T-cell (primary cell): ENCODE measurements at regions of chr20 and their contacts with region 1.

Region 1: DNA sequence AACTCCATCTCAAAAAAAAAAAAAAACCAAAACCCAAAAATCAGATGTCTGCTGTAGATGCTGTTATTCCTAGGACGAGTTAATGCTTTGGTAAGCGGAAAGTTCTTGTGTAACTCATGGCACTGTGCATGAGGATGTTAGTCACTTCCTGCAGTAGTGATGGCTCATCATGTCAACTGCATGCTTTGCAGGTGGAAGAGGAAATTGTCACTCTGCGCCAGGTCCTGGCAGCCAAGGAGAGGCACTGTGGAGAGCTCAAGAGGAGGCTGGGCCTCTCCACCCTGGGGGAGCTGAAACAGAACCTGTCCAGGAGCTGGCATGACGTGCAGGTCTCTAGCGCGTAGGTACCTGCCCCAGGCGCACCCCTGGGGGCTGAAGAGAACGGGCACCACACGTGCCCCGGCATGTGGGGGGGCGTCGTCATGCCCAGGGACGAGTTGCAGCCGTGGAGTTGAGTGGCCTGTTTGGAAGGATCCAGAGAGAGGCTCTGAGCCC is 8.5 kb downstream of the TPD52L2 start:
- DNase-seq: no peak
- ATAC-seq: peak; percentile 37 to 84 (median 52)
- H3K4me3 ChIP-seq: no peak overlapping the region
- H3K4me3 Mint-ChIP-seq: no peak overlapping the region
- H3K27ac ChIP-seq: no peak overlapping the region
- H3K27ac Mint-ChIP-seq: peak overlapping the region in 1 of 2 donors; percentile 36
- H3K4me1 ChIP-seq: peaks cover 0 to 4% of the 10 kb centered on the region in 2 experiments
- H3K4me1 Mint-ChIP-seq: peaks cover 4 to 6% (median 6%) of the 10 kb centered on the region in 3 donors
- H3K27me3 ChIP-seq: no peaks in the 10 kb centered on the region
- H3K27me3 Mint-ChIP-seq: no peaks in the 10 kb centered on the region

Region 2: GRCh38 chr20:63835021-63835858 is 38.3 kb before region 1 on chr20:
- CTCF ChIA-PET with region 1: no interaction called
- POLR2A ChIA-PET with region 1: no interaction called
- DNase-seq: no peak
- ATAC-seq: no peak
- H3K4me3 ChIP-seq: no peak overlapping the region
- H3K4me3 Mint-ChIP-seq: no peak overlapping the region
- H3K27ac ChIP-seq: no peak overlapping the region
- H3K27ac Mint-ChIP-seq: no peak overlapping the region
- H3K4me1 ChIP-seq: no peaks in the 10 kb centered on the region
- H3K4me1 Mint-ChIP-seq: peaks cover 0 to 8% (median 1%) of the 10 kb centered on the region in 3 donors
- H3K27me3 ChIP-seq: peaks cover 0 to 36% of the 10 kb centered on the region in 2 experiments
- H3K27me3 Mint-ChIP-seq: peaks cover 0 to 16% of the 10 kb centered on the region in 2 donors

Region 3: GRCh38 chr20:63955827-63956663 is 82.5 kb after region 1 on chr20 and contains the start of gene UCKL1:
- CTCF ChIA-PET with region 1: no interaction called
- POLR2A ChIA-PET with region 1: interaction called in 1 of 2 experiments, 17 read pairs
- DNase-seq: peak; percentile 77 to 93 (median 87)
- ATAC-seq: peak; percentile 80 to 85 (median 82)
- H3K4me3 ChIP-seq: peak within 1 kb of the TSS; percentile 73 to 74
- H3K4me3 Mint-ChIP-seq: peak within 1 kb of the TSS; percentile 75 to 82 (median 81)
- H3K27ac ChIP-seq: peak within 1 kb of the TSS; percentile 57
- H3K27ac Mint-ChIP-seq: peak within 1 kb of the TSS; percentile 88 to 91
- H3K4me1 ChIP-seq: peaks cover 11 to 53% of the 10 kb centered on the region in 2 experiments
- H3K4me1 Mint-ChIP-seq: peaks cover 27 to 46% (median 32%) of the 10 kb centered on the region in 3 donors
- H3K27me3 ChIP-seq: no peaks in the 10 kb centered on the region
- H3K27me3 Mint-ChIP-seq: no peaks in the 10 kb centered on the region
- total RNA-seq, gene UCKL1: 40.6 to 72.3 (median 67.0) TPM